Brain microvascular endothelial cell (primary cell): ENCODE measurements at regions of chr16 and their contacts with region 1.

Region 1: DNA sequence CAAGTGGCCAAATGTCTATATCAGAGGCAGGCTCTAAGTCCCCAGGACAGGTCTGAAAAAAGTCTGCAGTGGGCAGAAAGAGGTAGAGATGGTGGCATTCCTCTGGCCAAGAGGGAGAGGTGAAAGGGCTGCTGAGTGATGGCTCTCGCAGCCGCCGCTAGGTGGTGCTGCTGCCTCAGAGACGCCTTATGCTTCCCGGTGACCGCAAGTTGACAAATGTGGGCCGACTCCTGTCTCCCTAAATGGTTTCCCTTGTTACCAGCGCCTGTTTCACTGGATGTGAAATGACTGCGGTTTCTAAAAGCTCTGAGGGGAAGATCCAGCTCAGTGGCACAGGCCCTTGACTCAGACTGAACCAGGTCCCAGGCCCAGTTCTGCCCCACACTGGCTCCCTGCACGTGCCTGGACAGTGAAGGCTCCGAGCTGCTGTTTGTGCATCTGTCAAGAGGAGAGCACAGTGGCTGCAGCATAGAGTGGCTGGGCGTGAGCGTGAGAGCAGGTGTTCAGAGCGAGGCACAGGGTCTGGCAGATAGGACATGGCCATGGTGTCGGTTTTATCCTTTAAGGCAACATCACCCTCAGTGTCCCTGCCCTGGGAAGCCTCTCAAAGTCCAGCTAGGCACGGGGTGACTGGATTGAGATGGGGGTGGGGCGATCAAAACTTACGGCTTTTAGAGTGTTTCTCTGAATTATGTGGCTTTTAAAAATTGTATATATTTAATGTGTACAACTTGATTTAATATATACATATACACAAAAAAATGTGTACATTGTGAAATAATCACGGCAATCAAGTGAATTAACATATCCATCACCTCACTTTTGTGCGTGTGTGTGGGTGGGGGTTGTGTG is 19.9 kb downstream of the CLEC16A start:
- DNase-seq: peak; percentile 66
- H3K4me3 ChIP-seq: no peak overlapping the region
- H3K27ac ChIP-seq: no peak overlapping the region
- H3K27me3 ChIP-seq: no peaks in the 10 kb centered on the region
- CTCF ChIP-seq: peak; percentile 97

Region 2: DNA sequence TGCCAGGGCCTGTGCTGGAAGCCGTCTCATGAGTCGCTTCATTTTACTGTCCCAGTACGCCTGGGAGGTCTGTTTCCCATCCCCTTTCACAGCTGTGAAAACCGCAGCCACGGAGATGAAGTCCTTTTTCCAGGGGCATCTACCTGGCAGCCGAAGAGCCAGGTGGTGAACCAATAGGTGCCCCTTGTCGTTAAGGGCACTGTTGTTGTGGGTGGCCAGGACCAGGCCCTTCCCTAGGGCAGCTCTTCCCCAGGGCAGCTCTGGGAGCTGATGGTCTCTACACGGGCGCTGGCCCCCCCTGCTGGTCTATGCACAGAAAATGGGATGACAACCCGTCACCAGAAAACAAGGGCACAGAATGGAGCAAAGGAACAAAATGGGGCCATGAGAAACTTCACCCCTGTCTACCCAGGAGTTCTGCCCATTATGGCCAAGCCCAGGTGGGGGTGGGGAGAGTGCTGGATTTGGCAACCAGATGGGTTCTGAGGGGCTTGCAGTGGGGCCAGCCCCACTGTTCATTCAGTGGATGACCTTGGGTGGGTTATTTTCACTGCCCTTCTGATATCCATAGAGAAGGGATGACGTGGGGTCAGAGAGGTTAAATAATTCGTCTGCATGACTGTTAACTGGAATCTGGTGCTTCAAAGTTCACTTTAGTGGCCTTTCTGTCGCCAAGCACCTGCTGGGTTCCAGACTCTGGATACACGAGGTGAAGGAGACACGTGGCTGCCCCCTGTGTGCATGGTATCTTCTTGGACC is 392.5 kb after region 1 on chr16:
- in situ Hi-C with region 1: loop called (anchors 25 kb)
- DNase-seq: peak; percentile 56
- H3K4me3 ChIP-seq: no peak overlapping the region
- H3K27ac ChIP-seq: no peak overlapping the region
- H3K27me3 ChIP-seq: no peaks in the 10 kb centered on the region
- CTCF ChIP-seq: peak; percentile 89